ENCODE measurements at regions of chr10 and their contacts with region 1.

Region 1: GRCh38 chr10:76311752-76312636 is 880.6 kb downstream of the LRMDA start:
- DNase-seq: no peak
- H3K4me3 ChIP-seq: no peak overlapping the region
- H3K27ac ChIP-seq: no peak overlapping the region
- H3K4me1 ChIP-seq: peaks cover 0 to 2% (median 0%) of the 10 kb centered on the region in 4 experiments; a peak in 1 of 7 replicates
- H3K27me3 ChIP-seq: no peaks in the 10 kb centered on the region
- CTCF ChIP-seq: peak; percentile 83 to 95 (median 88)
- EP300 ChIP-seq: no peak
- POLR2A ChIP-seq: no peak
- RAD21 ChIP-seq: peak; percentile 85 to 89

Region 2: GRCh38 chr10:76324283-76324682 is 12.3 kb after region 1 on chr10:
- CTCF ChIA-PET with region 1: interaction called, 10 read pairs
- POLR2A ChIA-PET with region 1: no interaction called
- DNase-seq: no peak
- H3K4me3 ChIP-seq: no peak overlapping the region
- H3K27ac ChIP-seq: no peak overlapping the region
- H3K4me1 ChIP-seq: no peaks in the 10 kb centered on the region
- H3K27me3 ChIP-seq: no peaks in the 10 kb centered on the region
- CTCF ChIP-seq: no peak
- EP300 ChIP-seq: no peak
- POLR2A ChIP-seq: no peak
- RAD21 ChIP-seq: no peak